Panc1 (cell line): ENCODE measurements at regions of chr11 and their contacts with region 1.

Region 1: GRCh38 chr11:104366321-104366734 is 202.4 kb upstream of the PDGFD start:
- DNase-seq: no peak
- ATAC-seq: no peak
- H3K4me3 ChIP-seq: no peak overlapping the region
- H3K27ac ChIP-seq: no peak overlapping the region
- H3K4me1 ChIP-seq: no peaks in the 10 kb centered on the region
- H3K27me3 ChIP-seq: no peaks in the 10 kb centered on the region
- CTCF ChIP-seq: no peak

Region 2: GRCh38 chr11:104765401-104766095 is 399.2 kb after region 1 on chr11:
- CTCF ChIA-PET with region 1: interaction called, 14 read pairs
- POLR2A ChIA-PET with region 1: no interaction called
- in situ Hi-C with region 1: no loop called
- intact Hi-C with region 1: no loop called
- DNase-seq: no peak
- ATAC-seq: no peak
- H3K4me3 ChIP-seq: no peak overlapping the region
- H3K27ac ChIP-seq: no peak overlapping the region
- H3K4me1 ChIP-seq: no peaks in the 10 kb centered on the region
- H3K27me3 ChIP-seq: no peaks in the 10 kb centered on the region
- CTCF ChIP-seq: no peak